Activated CD4-positive, alpha-beta T cell treated with anti-CD3 and anti-CD28 coated beads, Interleukin-2, amount 10 ng/mL, durations not matched to agents 24 days and 14 days (primary cell): ENCODE measurements at regions of chr4 and their contacts with region 1.

Region 1: GRCh38 chr4:38160487-38161207 is 200.4 kb downstream of the PTTG2 start:
- DNase-seq: peak; percentile 88
- H3K4me3 Mint-ChIP-seq: peak overlapping the region; percentile 5
- H3K27ac Mint-ChIP-seq: peak overlapping the region; percentile 84
- H3K4me1 Mint-ChIP-seq: peaks cover 59% of the 10 kb centered on the region
- H3K27me3 Mint-ChIP-seq: peaks cover 7% of the 10 kb centered on the region

Region 2: GRCh38 chr4:38062088-38062893 is 98.4 kb before region 1 on chr4:
- intact Hi-C with region 1: loop called (anchors 5 kb)
- DNase-seq: peak; percentile 88
- H3K4me3 Mint-ChIP-seq: peak overlapping the region; percentile 88
- H3K27ac Mint-ChIP-seq: peak overlapping the region; percentile 69
- H3K4me1 Mint-ChIP-seq: peaks cover 12% of the 10 kb centered on the region
- H3K27me3 Mint-ChIP-seq: no peaks in the 10 kb centered on the region

Region 3: GRCh38 chr4:38091636-38092035 is 69.0 kb before region 1 on chr4:
- intact Hi-C with region 1: loop called (anchors 2 kb)
- DNase-seq: no peak
- H3K4me3 Mint-ChIP-seq: no peak overlapping the region
- H3K27ac Mint-ChIP-seq: no peak overlapping the region
- H3K4me1 Mint-ChIP-seq: peaks cover 17% of the 10 kb centered on the region
- H3K27me3 Mint-ChIP-seq: no peaks in the 10 kb centered on the region

Region 4: GRCh38 chr4:38125816-38126215 is 34.8 kb before region 1 on chr4:
- intact Hi-C with region 1: no loop called
- DNase-seq: no peak
- H3K4me3 Mint-ChIP-seq: no peak overlapping the region
- H3K27ac Mint-ChIP-seq: no peak overlapping the region
- H3K4me1 Mint-ChIP-seq: peaks cover 35% of the 10 kb centered on the region
- H3K27me3 Mint-ChIP-seq: no peaks in the 10 kb centered on the region

Region 5: GRCh38 chr4:38529189-38530115 is 368.8 kb after region 1 on chr4:
- intact Hi-C with region 1: loop called (anchors 5 kb)
- DNase-seq: peak; percentile 82
- H3K4me3 Mint-ChIP-seq: peak overlapping the region; percentile 56
- H3K27ac Mint-ChIP-seq: peak overlapping the region; percentile 91
- H3K4me1 Mint-ChIP-seq: peaks cover 17% of the 10 kb centered on the region
- H3K27me3 Mint-ChIP-seq: peaks cover 12% of the 10 kb centered on the region

Region 6: DNA sequence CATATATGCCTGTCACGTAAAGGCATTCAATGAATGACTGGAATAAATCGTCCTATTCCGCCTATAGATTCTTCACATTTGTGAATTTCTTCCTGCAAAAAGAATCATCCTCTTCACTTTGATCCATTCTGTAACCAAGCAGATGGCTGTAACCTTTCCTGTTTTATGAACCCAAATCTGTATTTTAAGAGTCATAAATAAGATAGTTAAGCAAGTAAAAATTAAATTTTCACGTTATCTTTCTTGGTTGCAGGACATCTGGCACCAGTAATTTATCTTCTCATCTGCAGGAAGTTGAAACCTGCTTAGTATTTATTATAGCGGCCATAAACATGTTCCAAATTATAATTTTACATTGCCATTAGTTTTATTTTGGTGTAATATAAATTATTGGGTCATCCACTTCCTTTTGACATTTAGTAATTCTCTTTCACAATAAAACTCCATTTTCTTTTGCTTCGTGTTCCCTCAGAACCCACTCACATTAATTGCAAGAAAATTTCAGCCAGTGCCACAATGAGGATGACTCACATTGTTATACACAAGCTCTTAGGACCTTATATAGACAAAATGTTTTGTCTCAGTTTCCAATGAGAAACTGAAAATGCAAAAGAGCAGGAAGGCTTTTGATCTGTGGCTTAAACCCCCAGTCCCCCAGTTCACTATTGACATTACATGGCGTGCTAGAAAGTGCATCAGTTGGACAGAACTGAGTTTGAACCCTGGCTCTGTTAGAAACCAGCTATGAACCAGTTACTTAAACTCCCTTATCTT is 820.4 kb after region 1 on chr4:
- intact Hi-C with region 1: loop called (anchors 5 kb)
- DNase-seq: peak; percentile 73
- H3K4me3 Mint-ChIP-seq: peak overlapping the region; percentile 69
- H3K27ac Mint-ChIP-seq: peak overlapping the region; percentile 87
- H3K4me1 Mint-ChIP-seq: peaks cover 55% of the 10 kb centered on the region
- H3K27me3 Mint-ChIP-seq: no peaks in the 10 kb centered on the region

Region 7: DNA sequence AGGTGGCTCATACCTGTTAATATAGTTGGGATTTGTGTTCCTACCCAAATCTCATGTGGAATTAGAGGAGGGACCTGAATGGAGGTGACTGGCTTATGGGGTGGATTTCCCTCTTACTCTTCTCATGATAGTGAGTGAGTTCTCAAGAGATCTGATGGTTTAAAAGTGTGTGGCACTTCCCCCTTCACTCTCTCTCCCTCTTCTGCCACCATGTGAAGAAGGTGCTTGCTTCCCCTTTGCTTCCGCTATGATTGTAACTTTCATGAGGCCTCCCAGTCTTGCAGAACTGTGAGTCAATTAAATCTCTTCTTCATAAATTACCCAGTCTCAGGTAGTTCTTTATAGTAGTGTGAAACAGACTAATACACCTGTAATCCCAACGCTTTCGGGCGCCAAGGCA is 993.4 kb after region 1 on chr4:
- intact Hi-C with region 1: no loop called
- DNase-seq: no peak
- H3K4me3 Mint-ChIP-seq: no peak overlapping the region
- H3K27ac Mint-ChIP-seq: no peak overlapping the region
- H3K4me1 Mint-ChIP-seq: peaks cover 6% of the 10 kb centered on the region
- H3K27me3 Mint-ChIP-seq: no peaks in the 10 kb centered on the region